ENCODE measurements at regions of chr17 and their contacts with region 1.

Region 1: DNA sequence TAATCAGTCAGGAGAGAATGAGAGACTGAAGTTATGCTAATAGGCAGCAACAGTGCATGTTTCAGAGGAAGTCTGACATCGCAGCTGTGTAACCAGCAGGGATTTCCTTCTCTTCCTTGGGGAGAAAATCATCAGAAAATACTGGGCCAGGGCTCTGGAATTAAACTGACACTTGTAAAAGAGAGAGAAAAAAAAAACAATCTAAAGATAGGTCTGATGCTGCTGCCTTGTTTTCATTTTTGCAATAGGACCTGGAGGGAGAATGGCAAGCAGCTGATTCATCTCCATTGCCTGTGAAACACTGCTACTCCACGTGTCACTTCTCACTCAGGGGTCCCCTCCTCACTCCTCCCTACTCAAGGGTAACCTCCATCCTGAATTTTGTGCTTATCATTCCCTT is 17.7 kb upstream of the CORO6 start:
- DNase-seq: no peak
- ATAC-seq: no peak
- H3K4me3 ChIP-seq: no peak overlapping the region
- H3K27ac ChIP-seq: peak overlapping the region; percentile 10 to 82; a peak in 3 of 6 replicates
- H3K4me1 ChIP-seq: peaks cover 47% of the 10 kb centered on the region
- CTCF ChIP-seq: no peak
- EP300 ChIP-seq: no peak
- POLR2A ChIP-seq: no peak
- RAD21 ChIP-seq: no peak

Region 2: GRCh38 chr17:29483503-29483902 is 156.9 kb before region 1 on chr17:
- CTCF ChIA-PET with region 1: no interaction called
- POLR2A ChIA-PET with region 1: no interaction called
- DNase-seq: no peak
- ATAC-seq: no peak
- H3K4me3 ChIP-seq: no peak overlapping the region
- H3K27ac ChIP-seq: no peak overlapping the region
- H3K4me1 ChIP-seq: peaks cover 9% of the 10 kb centered on the region; the same call in 1 of the 3 replicates
- CTCF ChIP-seq: no peak
- EP300 ChIP-seq: no peak
- POLR2A ChIP-seq: no peak
- RAD21 ChIP-seq: no peak

Region 3: DNA sequence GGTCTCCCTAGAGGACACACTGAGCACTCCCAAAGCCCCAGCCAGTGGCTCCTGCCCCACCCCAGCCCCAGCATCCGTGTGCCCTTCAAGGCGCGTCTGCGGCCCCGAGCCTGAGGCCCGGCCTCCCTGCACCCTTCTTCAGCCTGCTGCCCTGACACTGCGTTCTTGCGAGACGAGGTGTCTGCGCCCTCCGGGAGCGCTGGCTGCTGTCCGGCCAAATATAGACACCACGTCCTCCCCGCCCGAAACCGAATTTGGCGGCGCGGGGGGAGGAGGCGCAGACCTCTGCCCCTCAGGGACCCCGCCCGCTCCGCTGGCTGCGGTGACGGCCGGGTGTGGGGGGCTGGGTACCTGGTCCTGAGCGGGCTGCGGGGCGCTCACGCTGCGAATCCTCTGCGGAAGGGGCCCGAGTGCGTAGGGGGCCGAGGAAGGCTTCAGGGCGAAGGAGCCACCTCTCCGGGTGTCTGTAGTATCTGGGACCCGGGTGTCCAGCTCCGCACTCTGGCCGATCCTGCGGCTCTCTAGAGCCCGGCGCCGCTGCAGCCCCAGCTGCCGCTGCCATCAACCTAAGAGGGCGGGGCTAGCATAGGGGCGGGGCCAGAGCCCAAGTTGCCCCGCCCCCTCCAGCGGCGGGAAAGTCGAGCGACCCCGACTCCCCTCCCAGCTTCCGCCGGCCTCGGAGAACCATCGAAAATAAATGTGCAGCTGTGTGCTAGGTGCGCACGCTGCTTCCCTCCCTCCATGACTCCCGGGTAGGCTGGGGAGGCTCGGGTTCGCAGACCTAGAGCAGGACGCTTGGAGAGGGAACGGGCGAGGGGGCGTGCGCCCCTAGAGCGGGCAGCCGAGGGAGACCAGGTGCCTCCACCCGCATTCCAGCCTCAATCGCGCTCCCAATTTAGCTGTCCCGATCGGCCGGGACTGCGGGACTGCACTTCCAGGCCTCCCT is 17.8 kb before region 1 on chr17 and contains the start of gene CORO6:
- CTCF ChIA-PET with region 1: interaction called, 31 read pairs
- POLR2A ChIA-PET with region 1: interaction called, 8 read pairs
- DNase-seq: peak; percentile 50 to 75
- ATAC-seq: peak; percentile 43 to 68
- H3K4me3 ChIP-seq: peak within 1 kb of the TSS; percentile 61
- H3K27ac ChIP-seq: peak within 1 kb of the TSS; percentile 56 to 83
- H3K4me1 ChIP-seq: peaks cover 38% of the 10 kb centered on the region
- CTCF ChIP-seq: no peak
- EP300 ChIP-seq: no peak
- POLR2A ChIP-seq: peak; percentile 39
- RAD21 ChIP-seq: no peak
- polyA plus RNA-seq, gene CORO6: 5.0 and 6.1 TPM in 2 replicates

Region 4: GRCh38 chr17:29664743-29665480 is 24.5 kb after region 1 on chr17:
- CTCF ChIA-PET with region 1: interaction called, 91 read pairs
- POLR2A ChIA-PET with region 1: no interaction called
- DNase-seq: peak; percentile 22 to 29
- ATAC-seq: peak in 1 of 2 experiments; percentile 75; a peak in 3 of 6 replicates
- H3K4me3 ChIP-seq: no peak overlapping the region
- H3K27ac ChIP-seq: 0 out of 6 replicates have a peak overlapping the region, but pooled peaks of 1 of the 2 experiments have one; percentile 12
- H3K4me1 ChIP-seq: peaks cover 30% of the 10 kb centered on the region
- CTCF ChIP-seq: no peak
- EP300 ChIP-seq: no peak
- POLR2A ChIP-seq: no peak
- RAD21 ChIP-seq: no peak

Region 5: DNA sequence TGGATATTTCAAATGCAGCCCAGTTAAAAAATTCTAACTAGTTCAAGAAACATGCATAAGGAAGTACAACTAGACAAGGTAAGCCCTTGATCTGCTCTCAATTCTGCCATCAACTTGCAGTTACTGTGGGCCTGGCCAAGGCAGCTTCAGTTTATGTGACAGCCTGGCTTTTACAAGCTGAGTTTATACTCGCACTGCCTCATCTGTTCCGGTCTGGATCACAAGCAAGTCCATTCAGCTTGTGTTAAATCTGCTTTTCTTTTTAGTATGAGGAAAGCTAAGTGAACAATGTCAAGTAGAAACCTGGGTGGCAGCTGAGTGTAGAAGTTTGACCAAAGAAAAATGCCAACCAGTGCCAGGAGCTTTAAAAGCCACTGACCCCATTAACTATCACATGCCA is 58.9 kb after region 1 on chr17:
- CTCF ChIA-PET with region 1: interaction called, 11 read pairs
- POLR2A ChIA-PET with region 1: no interaction called
- DNase-seq: no peak
- ATAC-seq: no peak
- H3K4me3 ChIP-seq: no peak overlapping the region
- H3K27ac ChIP-seq: no peak overlapping the region
- H3K4me1 ChIP-seq: no peaks in the 10 kb centered on the region
- CTCF ChIP-seq: no peak
- EP300 ChIP-seq: no peak
- POLR2A ChIP-seq: no peak
- RAD21 ChIP-seq: no peak

Region 6: DNA sequence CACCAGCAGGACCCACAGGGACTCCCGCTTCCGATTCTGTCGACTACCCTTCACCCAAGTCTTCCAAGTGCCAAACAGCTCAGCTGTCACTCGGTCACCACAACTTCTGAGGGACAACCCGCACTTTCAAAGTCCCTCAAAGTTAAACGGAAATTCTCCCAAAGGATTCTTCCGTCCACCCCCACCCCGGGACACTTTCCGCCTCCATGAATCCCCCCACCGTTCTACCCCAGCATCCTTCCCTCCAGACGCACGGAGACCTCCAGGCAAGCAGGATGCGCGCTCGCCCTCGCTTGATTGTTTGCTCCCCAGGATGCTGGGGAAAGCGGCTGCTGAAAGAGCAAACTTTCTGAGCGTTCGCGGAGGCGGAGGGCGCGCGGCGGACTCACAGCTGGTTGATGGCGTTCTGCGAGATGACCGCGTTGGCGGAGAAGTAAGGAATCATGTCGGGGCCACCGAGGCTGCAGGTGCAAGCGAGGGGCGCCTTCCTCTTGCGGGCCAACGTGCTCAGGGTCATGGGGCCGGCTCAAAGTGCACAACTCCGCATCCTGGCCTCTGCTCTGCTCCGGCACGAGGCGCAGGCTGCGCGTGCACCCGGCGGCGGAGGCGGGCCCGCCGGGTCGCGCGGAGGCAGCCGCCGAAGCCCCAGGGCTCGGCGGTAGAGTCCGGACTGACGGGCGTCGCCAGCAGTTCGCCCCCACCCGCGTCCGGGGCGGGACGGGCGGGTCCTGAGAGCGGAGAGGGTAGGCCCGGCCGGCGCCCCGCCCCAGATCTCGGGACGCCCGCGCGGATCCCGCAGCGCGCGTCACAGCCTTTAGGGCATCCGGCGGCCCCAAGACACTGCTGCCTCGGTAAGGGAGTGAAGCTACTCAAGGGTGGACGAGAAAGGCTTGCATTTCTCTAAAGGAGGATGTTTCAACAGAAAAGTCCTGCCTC is 120.6 kb after region 1 on chr17:
- CTCF ChIA-PET with region 1: interaction called, 22 read pairs
- POLR2A ChIA-PET with region 1: interaction called, 16 read pairs
- DNase-seq: peak; percentile 79 to 88
- ATAC-seq: peak; percentile 98
- H3K4me3 ChIP-seq: peak overlapping the region; percentile 67
- H3K27ac ChIP-seq: peak overlapping the region; percentile 73 to 85
- H3K4me1 ChIP-seq: peaks cover 5% of the 10 kb centered on the region; the same call in 2 of the 3 replicates
- CTCF ChIP-seq: no peak
- EP300 ChIP-seq: no peak
- POLR2A ChIP-seq: peak; percentile 48
- RAD21 ChIP-seq: peak in 1 of 2 experiments; percentile 22; a peak in 1 of 5 replicates

Region 7: GRCh38 chr17:29789196-29790170 is 149.1 kb after region 1 on chr17:
- CTCF ChIA-PET with region 1: interaction called, 22 read pairs
- POLR2A ChIA-PET with region 1: no interaction called
- DNase-seq: no peak
- ATAC-seq: peak in 1 of 2 experiments; percentile 37; a peak in 1 of 6 replicates
- H3K4me3 ChIP-seq: no peak overlapping the region
- H3K27ac ChIP-seq: no peak overlapping the region
- H3K4me1 ChIP-seq: peaks cover 24% of the 10 kb centered on the region
- CTCF ChIP-seq: no peak
- EP300 ChIP-seq: no peak
- POLR2A ChIP-seq: no peak
- RAD21 ChIP-seq: no peak

Region 8: DNA sequence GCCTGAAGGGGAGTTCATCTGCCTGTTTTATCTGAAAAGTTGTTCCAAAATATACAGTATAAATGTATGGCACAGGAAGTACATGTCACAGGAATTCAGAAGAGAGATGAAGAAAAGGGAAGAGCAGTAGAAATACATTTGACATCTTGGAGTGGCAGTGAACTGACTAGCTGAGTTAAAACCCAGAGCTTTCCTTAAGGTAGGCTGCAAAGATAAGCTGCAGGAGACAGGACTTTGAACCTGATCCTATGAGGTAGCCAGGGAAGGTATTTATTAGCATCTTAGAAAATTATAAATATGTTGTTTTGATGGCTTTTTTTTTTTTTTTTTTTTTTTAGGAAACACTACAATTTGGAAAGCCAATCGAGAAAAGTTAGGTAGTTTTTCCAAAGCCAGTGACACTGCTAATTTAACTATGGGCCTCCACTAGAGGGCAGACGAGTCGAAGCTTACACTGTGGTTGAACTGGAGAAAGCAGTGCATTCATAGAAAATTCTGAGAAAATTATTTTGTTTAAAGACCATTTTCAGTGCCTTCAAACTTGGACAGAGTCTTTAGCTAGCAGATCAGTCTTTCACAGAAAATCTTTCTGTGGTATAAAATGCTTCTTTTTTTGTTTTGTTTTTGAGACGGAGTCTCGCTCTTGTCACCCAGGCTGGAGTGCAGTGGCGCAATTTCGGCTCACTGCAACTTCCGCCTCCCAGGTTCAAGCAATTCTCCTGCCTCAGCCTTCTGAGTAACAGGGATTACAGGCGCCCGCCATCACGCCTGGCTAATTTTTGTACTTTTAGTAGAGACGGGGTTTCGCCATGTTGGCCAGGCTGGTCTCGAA is 167.3 kb after region 1 on chr17:
- CTCF ChIA-PET with region 1: interaction called, 57 read pairs
- POLR2A ChIA-PET with region 1: interaction called, 3 read pairs
- DNase-seq: peak; percentile 72 to 73
- ATAC-seq: peak; percentile 90 to 94
- H3K4me3 ChIP-seq: peak overlapping the region; percentile 47
- H3K27ac ChIP-seq: peak overlapping the region; percentile 62 to 78
- H3K4me1 ChIP-seq: no peaks in the 10 kb centered on the region
- CTCF ChIP-seq: peak; percentile 99
- EP300 ChIP-seq: no peak
- POLR2A ChIP-seq: no peak
- RAD21 ChIP-seq: peak; percentile 92 to 93

Measured in A549 (cell line).